Gastrocnemius medialis (tissue), 4 donors: ENCODE measurements at regions of chr10 and their contacts with region 1.

Region 1: DNA sequence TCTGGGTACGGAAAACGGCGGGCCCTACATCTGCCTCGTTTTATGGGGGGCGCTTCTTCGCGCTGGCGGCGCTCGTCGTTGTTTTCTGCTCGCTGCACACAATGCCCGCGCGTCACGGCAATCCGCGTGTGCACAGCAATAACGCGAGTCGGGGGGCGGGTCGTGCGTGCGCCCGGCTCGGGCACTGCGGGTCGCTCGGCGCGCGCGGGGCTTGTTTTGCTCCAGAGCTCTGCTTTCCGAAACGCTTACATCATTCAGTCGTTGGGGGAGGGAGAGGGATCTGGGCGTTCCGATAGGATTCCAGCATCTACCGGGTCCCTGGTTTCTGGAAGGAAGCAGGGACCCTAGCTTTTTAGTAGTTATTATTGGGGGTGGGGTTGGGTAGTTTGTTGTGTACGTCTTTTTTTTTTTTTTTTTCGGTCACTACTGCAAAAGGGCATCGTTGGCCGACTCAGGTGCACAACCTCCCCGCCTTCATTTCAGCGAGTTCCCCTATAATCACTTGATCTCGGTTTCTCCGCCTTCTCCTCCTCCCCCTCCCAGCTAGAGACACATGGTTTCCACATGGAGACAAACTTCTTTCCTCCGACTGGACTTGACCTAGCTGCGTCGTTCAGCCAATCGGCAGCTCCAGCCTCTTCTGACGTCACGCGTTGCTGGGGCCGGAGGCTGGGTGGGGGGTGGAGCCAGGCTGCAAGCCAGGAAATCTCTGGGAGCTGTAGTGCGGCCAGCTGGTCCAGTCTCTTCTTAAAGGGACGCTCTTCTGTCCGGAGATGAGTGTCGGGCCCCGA is 3.5 kb downstream of the MXI1 start:
- DNase-seq: peak; percentile 96 to 97
- ATAC-seq: peak; percentile 93
- H3K4me3 ChIP-seq: peak overlapping the region; percentile 78 to 94 (median 84)
- H3K27ac ChIP-seq: peak overlapping the region; percentile 89 to 98 (median 98)
- H3K4me1 ChIP-seq: peaks cover 6 to 27% of the 10 kb centered on the region in 2 donors
- H3K27me3 ChIP-seq: no peaks in the 10 kb centered on the region
- CTCF ChIP-seq: no peak
- POLR2A ChIP-seq: peak; percentile 65 to 86

Region 2: DNA sequence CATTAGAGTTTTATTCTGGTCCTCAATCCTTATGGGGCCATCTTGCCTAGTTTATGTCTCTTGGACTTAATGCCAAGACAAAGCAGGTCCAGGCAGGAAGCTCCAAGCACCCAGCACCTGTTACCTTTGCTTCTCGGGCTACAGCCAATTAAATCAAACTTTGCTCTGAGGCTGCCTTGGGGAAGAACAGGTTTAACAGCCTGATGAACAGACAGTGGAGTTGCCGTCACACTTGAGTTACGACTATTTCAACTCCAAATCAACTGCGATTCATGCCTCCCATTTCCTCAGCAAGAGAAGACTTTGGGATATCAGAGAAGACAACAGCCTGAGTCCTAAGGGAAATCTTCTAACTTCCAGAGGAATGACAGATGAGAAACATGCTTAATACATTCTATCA is 349.8 kb before region 1 on chr10:
- in situ Hi-C with region 1: no loop called
- intact Hi-C with region 1: no loop called
- DNase-seq: no peak
- ATAC-seq: no peak
- H3K4me3 ChIP-seq: no peak overlapping the region
- H3K27ac ChIP-seq: no peak overlapping the region
- H3K4me1 ChIP-seq: no peaks in the 10 kb centered on the region
- H3K27me3 ChIP-seq: no peaks in the 10 kb centered on the region
- CTCF ChIP-seq: no peak
- POLR2A ChIP-seq: no peak

Region 3: DNA sequence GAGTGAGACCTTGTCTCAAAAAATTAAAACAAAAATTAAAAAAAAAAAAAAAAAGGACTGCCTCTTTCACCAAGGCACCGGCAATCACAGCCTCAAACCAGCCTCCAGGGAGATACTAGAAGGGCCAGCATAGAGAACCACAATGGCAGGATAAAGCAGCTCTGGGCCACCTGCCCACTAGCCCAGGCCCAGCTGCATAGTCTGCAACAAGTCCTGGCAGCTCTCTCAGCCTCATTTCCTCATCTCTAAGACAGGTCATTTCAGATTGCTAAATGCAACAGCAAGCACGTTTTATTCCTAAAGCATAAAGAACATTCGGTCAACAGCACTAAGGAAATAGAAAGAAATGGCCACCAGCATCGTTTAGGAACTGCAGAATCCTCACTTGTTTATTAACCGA is 316.4 kb before region 1 on chr10:
- in situ Hi-C with region 1: no loop called
- intact Hi-C with region 1: loop called (anchors 5 kb)
- DNase-seq: peak; percentile 83 to 92
- ATAC-seq: peak; percentile 91 to 93
- H3K4me3 ChIP-seq: no peak overlapping the region
- H3K27ac ChIP-seq: peak overlapping the region; percentile 66 to 73 (median 72)
- H3K4me1 ChIP-seq: peaks cover 36 to 55% of the 10 kb centered on the region in 2 donors
- H3K27me3 ChIP-seq: no peaks in the 10 kb centered on the region
- CTCF ChIP-seq: no peak
- POLR2A ChIP-seq: peak in 1 of 2 donors; percentile 16

Region 4: DNA sequence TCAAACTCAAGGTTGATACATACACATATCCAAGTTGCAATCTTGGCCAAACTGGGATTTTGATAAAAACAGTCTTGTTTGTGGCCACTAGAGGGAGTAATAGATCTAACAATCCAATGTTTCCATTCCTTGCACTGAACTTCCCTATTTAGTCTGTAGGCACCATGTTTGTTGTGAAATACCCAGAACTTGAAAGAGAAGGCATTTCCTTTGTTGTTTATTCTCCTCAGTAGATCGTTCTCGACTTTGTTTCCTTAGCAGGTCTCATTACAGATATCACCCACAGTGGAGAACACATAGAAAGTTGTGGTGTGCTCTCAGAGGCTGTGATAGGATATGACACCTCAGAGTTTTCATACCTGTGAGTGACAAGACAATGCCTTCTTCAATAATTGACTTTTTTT is 73.7 kb before region 1 on chr10:
- in situ Hi-C with region 1: loop called in 1 of 4 experiments (anchors 10 kb)
- intact Hi-C with region 1: loop called (anchors 2 kb)
- DNase-seq: no peak
- ATAC-seq: peak; percentile 91 to 93
- H3K4me3 ChIP-seq: no peak overlapping the region
- H3K27ac ChIP-seq: peak overlapping the region; percentile 37 to 65 (median 58)
- H3K4me1 ChIP-seq: peaks cover 11 to 17% of the 10 kb centered on the region in 2 donors
- H3K27me3 ChIP-seq: no peaks in the 10 kb centered on the region
- CTCF ChIP-seq: peak; percentile 77 to 93 (median 83)
- POLR2A ChIP-seq: no peak

Region 5: DNA sequence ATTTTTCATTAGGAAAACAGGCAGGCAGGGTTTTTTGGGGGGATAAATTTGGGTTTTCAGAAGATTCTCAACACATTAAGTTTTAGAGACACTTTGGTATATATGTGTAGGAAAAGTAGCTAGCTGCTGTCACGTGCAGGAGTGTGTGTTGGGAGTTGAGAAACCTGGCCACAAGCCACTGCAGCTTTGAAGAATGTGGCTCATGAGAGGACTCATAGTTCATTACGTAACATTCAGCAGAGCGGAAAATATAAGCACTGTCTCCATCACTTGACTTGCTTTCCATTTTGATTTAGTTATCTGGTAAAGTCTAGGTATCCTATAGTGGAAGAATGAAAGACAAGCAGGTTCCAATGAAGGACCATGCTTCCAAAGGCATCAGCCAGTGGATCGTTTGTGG is 62.6 kb after region 1 on chr10:
- in situ Hi-C with region 1: no loop called
- intact Hi-C with region 1: loop called (anchors 2 kb)
- DNase-seq: peak; percentile 38 to 63
- ATAC-seq: no peak
- H3K4me3 ChIP-seq: no peak overlapping the region
- H3K27ac ChIP-seq: peak overlapping the region; percentile 11 to 89 (median 41)
- H3K4me1 ChIP-seq: peaks cover 62 to 67% of the 10 kb centered on the region in 2 donors
- H3K27me3 ChIP-seq: no peaks in the 10 kb centered on the region
- CTCF ChIP-seq: no peak
- POLR2A ChIP-seq: no peak

Region 6: GRCh38 chr10:110285501-110285900 is 74.6 kb after region 1 on chr10:
- in situ Hi-C with region 1: loop called in 1 of 4 experiments (anchors 10 kb)
- intact Hi-C with region 1: no loop called
- DNase-seq: no peak
- ATAC-seq: no peak
- H3K4me3 ChIP-seq: no peak overlapping the region
- H3K27ac ChIP-seq: no peak overlapping the region
- H3K4me1 ChIP-seq: no peaks in the 10 kb centered on the region
- H3K27me3 ChIP-seq: no peaks in the 10 kb centered on the region
- CTCF ChIP-seq: no peak
- POLR2A ChIP-seq: no peak

Region 7: DNA sequence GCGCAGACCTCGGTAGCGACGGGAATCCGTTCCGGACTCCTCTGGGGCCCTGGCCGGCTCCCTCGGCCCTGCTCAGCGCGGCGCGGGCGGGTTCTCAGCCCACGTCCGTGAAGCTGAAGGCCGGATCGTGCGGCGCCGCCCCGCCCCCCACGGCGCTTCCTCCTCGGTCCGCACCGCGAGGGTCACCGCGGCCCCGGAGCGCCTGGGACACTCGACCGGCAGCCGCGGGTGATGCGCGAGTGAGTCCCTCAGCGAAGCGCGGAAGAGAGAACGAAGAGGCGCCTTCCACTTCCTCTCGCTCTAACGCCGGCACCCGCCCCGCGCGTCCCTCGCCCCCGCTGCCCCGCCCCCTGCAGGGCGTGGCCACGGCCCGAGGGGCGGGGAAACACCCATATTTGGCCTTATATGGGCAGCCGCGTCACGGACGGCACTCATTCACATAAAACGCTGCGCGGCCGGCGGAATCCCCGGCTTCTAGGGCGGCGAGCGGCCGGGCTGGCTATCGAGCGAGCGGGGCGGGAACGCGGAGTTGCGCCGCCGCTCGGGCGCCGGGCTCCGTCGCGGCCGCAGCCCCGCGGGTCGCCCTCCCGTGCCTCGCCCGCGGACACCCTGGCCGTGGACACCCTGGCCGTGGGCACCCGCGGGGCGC is 286.7 kb after region 1 on chr10 and contains the start of gene DUSP5:
- in situ Hi-C with region 1: no loop called
- intact Hi-C with region 1: loop called (anchors 5 kb)
- DNase-seq: peak; percentile 81 to 87
- ATAC-seq: peak; percentile 92 to 94
- H3K4me3 ChIP-seq: peak within 1 kb of the TSS; percentile 66 to 89 (median 83)
- H3K27ac ChIP-seq: peak within 1 kb of the TSS; percentile 67 to 83 (median 81)
- H3K4me1 ChIP-seq: peaks cover 8 to 18% of the 10 kb centered on the region in 2 donors
- H3K27me3 ChIP-seq: peaks cover 8 to 12% (median 8%) of the 10 kb centered on the region in 3 donors
- CTCF ChIP-seq: peak in 1 of 5 experiments; percentile 8
- POLR2A ChIP-seq: peak; percentile 83 to 96
- total RNA-seq, gene DUSP5: 0.75 to 2.8 (median 2.5) TPM in 3 of 4 donors, not detected in the other